HCT116 (cell line): ENCODE measurements at regions of chr7 and their contacts with region 1.

Region 1: GRCh38 chr7:105245398-105246114 is 143.2 kb downstream of the SRPK2 start:
- DNase-seq: no peak
- ATAC-seq: no peak
- H3K4me3 ChIP-seq: no peak overlapping the region
- H3K27ac ChIP-seq: no peak overlapping the region
- H3K4me1 ChIP-seq: no peaks in the 10 kb centered on the region
- H3K27me3 ChIP-seq: no peaks in the 10 kb centered on the region
- CTCF ChIP-seq: no peak
- POLR2A ChIP-seq: no peak
- RAD21 ChIP-seq: no peak

Region 2: DNA sequence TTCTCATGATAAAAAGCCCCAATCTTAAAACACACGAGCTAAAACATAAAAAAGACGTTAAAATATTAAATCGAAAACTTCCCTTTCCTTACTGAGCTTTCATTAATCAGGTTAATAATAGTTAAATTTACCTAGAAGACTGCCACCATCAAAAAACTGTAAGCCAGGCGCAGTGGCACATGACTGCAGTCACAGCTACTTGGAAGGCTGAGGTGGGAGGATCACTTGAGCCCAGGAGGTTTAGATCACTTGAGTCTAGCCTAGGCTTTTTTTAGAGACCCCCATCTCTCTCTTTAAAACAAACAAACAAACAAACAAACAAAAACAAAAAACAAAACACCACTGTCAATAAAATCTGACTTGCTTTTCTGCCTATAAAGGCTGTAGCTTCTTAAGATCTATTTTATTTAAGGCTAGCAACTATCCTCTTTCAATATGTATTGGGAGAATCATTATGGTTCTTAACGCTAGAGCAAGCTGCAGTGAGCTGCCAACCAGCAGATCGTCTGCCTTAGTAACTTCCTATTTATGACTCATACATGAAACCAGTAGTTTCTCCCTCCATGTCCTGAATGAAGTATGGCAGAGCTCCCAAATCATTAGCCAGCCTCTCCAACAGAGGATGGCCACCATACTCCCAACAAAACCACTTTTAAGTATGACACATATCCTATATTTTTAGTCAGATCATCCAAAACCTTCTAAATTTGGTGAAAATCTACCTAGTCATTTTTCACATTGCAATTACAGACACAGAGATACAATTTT is 20.5 kb before region 1 on chr7:
- CTCF ChIA-PET with region 1: no interaction called
- POLR2A ChIA-PET with region 1: no interaction called
- RAD21 ChIA-PET with region 1: no interaction called
- intact Hi-C with region 1: loop called (anchors 1 kb)
- DNase-seq: peak; percentile 70
- ATAC-seq: peak; percentile 94
- H3K4me3 ChIP-seq: peak overlapping the region in 1 of 2 experiments; percentile 33; a peak in 3 of 4 replicates
- H3K27ac ChIP-seq: no peak overlapping the region
- H3K4me1 ChIP-seq: peaks cover 8 to 23% of the 10 kb centered on the region in 2 experiments
- H3K27me3 ChIP-seq: no peaks in the 10 kb centered on the region
- CTCF ChIP-seq: no peak
- POLR2A ChIP-seq: no peak
- RAD21 ChIP-seq: no peak

Region 3: GRCh38 chr7:105849122-105849855 is 603.7 kb after region 1 on chr7:
- CTCF ChIA-PET with region 1: no interaction called
- POLR2A ChIA-PET with region 1: no interaction called
- RAD21 ChIA-PET with region 1: no interaction called
- intact Hi-C with region 1: no loop called
- DNase-seq: no peak
- ATAC-seq: peak; percentile 49; the same call in 1 of the 2 replicates
- H3K4me3 ChIP-seq: no peak overlapping the region
- H3K27ac ChIP-seq: no peak overlapping the region
- H3K4me1 ChIP-seq: peaks cover 6 to 18% of the 10 kb centered on the region in 2 experiments
- H3K27me3 ChIP-seq: no peaks in the 10 kb centered on the region
- CTCF ChIP-seq: no peak
- POLR2A ChIP-seq: no peak
- RAD21 ChIP-seq: no peak